ENCODE measurements at regions of chr11 and their contacts with region 1.

Region 1: DNA sequence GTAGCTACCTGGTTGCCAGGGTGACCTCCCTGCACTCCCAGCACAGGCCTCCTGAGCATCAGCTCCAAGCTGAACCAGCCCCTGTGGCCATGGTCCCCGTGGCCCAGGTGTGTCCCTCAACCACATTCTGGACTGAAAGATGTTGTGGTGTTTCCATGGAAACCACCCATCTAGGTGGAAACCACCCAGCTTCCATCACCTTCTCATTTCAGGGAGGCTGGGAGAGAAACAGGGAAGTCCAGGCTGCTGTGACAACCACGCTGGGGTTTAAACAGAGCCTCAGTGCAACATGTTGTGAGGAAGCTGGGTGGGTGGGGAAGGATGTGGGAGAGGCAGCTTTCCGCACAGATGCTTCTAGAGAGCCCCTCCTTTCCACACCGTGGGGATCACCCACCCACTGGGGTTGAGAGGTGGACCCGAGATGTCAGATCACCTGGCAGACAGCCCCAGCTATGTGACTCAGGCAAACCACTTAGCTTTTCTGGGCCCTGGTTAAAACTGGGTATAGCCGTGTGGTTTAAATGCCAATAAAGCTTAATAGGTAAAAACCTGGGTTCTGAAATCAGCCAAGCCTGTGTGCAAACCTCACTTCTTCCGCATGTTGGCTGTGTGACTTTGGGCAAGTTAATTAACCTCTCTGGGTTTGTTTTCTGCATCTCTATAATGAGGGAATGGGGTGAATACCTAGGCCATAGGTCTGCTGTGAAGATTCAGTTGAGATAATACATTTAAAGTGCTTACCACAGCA is 46.4 kb downstream of the CD82 start:
- DNase-seq: peak; percentile 82 to 98 (median 96)
- H3K4me3 ChIP-seq: no peak overlapping the region
- H3K27ac ChIP-seq: peak overlapping the region; percentile 52 to 67
- H3K4me1 ChIP-seq: peaks cover 0 to 59% (median 50%) of the 10 kb centered on the region in 4 experiments
- H3K27me3 ChIP-seq: no peaks in the 10 kb centered on the region

Region 2: DNA sequence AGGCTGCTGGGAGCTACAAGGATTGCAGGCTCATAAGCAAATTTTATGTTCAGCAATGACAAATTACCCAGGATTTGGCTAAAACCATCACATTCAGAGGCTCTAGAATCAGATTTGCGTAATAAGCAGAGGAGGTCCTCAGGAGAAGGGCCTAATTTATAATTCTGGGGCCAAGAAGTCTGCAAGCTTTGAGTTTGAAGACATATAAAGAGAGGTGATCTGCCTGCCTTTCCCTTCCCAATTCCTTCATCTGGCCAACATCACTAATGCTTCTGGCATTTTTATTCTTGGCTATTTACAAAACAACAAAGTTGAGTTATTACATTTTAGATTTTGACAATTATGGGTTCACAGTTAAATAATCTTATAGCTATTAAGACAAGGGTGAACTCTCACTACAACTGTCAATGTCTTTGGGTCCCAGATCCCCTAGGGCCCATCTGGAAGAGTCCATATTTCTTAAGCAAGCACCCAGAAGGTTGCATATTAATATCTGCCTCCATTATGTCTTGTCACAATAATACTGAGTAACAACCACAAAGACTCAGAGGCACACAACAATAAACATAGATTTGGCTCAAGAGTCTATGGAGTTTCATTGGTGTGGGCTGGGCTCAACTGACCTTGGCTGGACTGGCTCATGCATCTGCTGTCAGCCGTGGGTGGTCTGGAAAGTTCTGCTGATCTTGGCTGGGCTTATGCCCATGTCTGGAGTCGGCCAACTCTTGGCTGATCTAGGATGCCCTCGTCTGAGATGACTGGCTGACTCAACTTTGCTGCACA is 113.6 kb before region 1 on chr11:
- CTCF ChIA-PET with region 1: no interaction called
- POLR2A ChIA-PET with region 1: no interaction called
- DNase-seq: no peak
- H3K4me3 ChIP-seq: no peak overlapping the region
- H3K27ac ChIP-seq: no peak overlapping the region
- H3K4me1 ChIP-seq: no peaks in the 10 kb centered on the region
- H3K27me3 ChIP-seq: peaks cover 0 to 8% (median 2%) of the 10 kb centered on the region in 5 experiments

Region 3: GRCh38 chr11:44565211-44565952 is 46.5 kb before region 1 on chr11 and contains the start of gene CD82:
- CTCF ChIA-PET with region 1: interaction called, 504 read pairs
- POLR2A ChIA-PET with region 1: interaction called, 12 read pairs
- DNase-seq: peak; percentile 96 to 98 (median 97)
- H3K4me3 ChIP-seq: peak within 1 kb of the TSS; percentile 83 to 99 (median 96)
- H3K27ac ChIP-seq: peak within 1 kb of the TSS; percentile 73 to 79
- H3K4me1 ChIP-seq: peaks cover 28 to 69% (median 61%) of the 10 kb centered on the region in 4 experiments
- H3K27me3 ChIP-seq: no peaks in the 10 kb centered on the region

Region 4: DNA sequence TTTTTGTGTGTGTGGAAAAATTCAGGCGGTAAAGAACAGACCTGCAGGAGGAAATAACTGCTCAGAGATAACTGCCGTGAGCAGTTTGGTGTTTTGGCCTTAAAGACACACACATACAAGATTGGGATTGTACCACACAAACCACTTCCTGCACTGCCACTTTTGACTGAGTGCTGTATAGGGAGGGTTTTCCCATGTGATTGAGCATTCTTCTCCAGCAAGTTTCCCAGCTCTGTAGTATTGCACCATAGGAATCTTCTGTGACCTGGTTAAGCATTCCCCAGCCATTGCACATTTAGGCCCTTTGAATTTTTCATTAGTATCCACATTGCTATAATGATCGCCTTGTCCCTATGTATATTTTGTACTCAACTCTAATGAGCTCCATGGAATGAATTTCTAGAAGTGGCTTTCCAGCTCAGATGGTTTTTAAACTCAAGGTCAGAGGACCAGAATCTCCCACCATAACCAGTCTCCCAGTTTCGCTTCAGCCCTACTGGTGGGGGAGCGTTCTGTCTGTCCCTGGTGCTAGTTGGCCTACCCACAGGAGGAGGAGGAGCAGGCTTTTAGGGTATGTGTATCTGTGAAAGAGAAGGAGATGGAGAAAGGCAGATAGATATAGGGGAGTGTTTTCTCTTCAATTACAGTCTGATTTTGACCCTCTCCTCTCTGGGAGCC is 37.1 kb before region 1 on chr11:
- CTCF ChIA-PET with region 1: interaction called, 504 read pairs
- POLR2A ChIA-PET with region 1: interaction called, 5 read pairs
- DNase-seq: peak; percentile 70 to 91 (median 87)
- H3K4me3 ChIP-seq: peak overlapping the region in 5 of 7 experiments; percentile 21 to 46 (median 37)
- H3K27ac ChIP-seq: peak overlapping the region; percentile 69 to 84
- H3K4me1 ChIP-seq: peaks cover 39 to 100% (median 100%) of the 10 kb centered on the region in 4 experiments
- H3K27me3 ChIP-seq: no peaks in the 10 kb centered on the region